Heart left ventricle (tissue), 16 donors: ENCODE measurements at regions of chr3 and their contacts with region 1.

Region 1: DNA sequence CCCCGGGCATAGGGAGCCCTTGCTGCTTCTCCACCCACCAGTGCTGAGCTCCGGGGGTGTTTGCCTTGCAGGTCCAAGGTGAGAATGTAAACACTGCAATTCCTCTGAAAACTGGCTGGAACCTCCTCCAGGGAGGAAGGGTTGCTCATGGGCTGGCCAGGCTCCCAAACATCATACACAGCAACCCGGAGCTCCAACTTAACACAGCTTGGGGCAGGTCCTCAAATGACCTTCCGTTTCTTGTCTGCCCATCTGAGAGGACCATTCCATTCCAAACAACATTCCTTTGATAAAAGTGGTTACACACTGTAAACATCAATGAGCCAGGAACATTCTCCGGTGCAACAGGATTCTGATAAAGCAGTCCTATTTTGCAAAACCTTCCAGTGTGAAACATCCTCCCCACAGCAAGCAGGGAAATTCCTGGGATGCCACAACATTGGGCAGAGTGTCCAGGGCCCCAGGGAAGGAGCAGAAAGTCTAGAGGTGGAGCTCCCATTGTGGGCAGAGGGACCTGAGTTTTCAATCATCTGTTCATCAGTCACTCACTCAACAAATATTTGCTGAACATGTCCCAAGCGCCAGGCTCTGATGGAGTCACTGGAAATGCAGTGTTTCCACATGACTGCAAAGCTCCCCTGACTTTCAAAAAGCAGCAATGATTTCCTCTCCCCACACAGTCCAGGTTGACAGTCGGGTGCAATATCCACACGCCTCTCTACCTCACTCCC is 7.3 kb upstream of the HEG1 start:
- DNase-seq: peak in 3 of 5 donors; percentile 36 to 51 (median 45)
- ATAC-seq: peak; percentile 28 to 70 (median 64)
- H3K4me3 ChIP-seq: peak overlapping the region in 3 of 12 donors; percentile 31 to 48 (median 33)
- H3K27ac ChIP-seq: peak overlapping the region; percentile 17 to 95 (median 76)
- H3K4me1 ChIP-seq: peaks cover 13 to 48% (median 36%) of the 10 kb centered on the region in 12 donors
- H3K27me3 ChIP-seq: no peaks in the 10 kb centered on the region
- CTCF ChIP-seq: no peak
- POLR2A ChIP-seq: no peak

Region 2: GRCh38 chr3:124985358-124985757 is 77.7 kb before region 1 on chr3:
- intact Hi-C with region 1: no loop called
- DNase-seq: peak in 1 of 5 donors; percentile 35
- ATAC-seq: peak in 3 of 4 donors; percentile 67 to 71 (median 69)
- H3K4me3 ChIP-seq: no peak overlapping the region
- H3K27ac ChIP-seq: peak overlapping the region in 11 of 12 donors; percentile 17 to 83 (median 55)
- H3K4me1 ChIP-seq: peaks cover 4 to 48% (median 22%) of the 10 kb centered on the region in 12 donors
- H3K27me3 ChIP-seq: no peaks in the 10 kb centered on the region
- CTCF ChIP-seq: no peak
- POLR2A ChIP-seq: no peak

Region 3: GRCh38 chr3:125119752-125120378 is 56.8 kb after region 1 on chr3:
- intact Hi-C with region 1: loop called in 4 of 10 experiments (anchors 5 to 10 kb)
- DNase-seq: no peak
- ATAC-seq: no peak
- H3K4me3 ChIP-seq: peak overlapping the region in 1 of 12 donors; percentile 20
- H3K27ac ChIP-seq: peak overlapping the region in 1 of 12 donors; percentile 50
- H3K4me1 ChIP-seq: peaks cover 0 to 62% (median 30%) of the 10 kb centered on the region in 12 donors
- H3K27me3 ChIP-seq: no peaks in the 10 kb centered on the region
- CTCF ChIP-seq: no peak
- POLR2A ChIP-seq: no peak

Region 4: DNA sequence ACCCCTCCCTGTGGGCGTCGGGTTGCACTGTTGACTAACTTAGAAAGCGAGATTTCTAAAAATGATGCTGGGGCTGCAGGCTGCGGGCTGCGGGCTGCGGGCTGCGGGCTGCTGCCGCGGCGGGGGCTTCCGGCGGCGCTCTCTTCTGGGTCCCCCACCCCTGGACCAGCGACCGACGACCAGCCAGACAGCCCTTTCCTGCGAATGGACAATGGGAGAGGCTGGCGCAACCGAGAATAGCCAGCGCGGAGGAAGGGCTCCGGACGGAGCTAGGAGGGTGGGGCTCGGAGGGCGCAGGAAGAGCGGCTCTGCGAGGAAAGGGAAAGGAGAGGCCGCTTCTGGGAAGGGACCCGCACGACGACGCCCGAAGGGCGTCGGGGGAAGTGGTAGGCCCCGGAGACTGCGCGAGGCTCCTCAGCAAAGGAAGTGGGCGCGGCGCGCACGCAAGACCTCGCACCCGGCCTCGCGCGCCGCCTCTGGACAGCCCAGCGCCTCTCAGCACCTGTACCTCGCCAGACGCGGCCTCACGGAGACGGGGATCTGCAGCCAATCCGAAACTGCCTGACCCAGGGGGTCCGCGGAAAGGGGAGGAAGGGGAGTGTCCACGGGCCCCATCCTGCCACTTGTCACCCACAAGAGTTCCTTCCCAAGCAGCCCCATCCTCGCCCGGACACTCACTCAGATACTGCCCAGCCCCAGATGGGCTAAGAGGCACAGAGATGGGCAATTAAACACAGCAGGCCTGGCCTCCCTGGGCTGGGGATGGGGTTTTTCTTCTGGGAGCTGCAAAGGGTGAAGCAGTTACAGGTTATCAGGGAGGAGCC is 78.8 kb after region 1 on chr3:
- intact Hi-C with region 1: loop called in 6 of 10 experiments (anchors 2 to 10 kb)
- DNase-seq: peak; percentile 84 to 89 (median 86)
- ATAC-seq: peak; percentile 47 to 88 (median 76)
- H3K4me3 ChIP-seq: peak overlapping the region in 11 of 12 donors; percentile 22 to 58 (median 46)
- H3K27ac ChIP-seq: peak overlapping the region; percentile 66 to 96 (median 79)
- H3K4me1 ChIP-seq: peaks cover 10 to 74% (median 57%) of the 10 kb centered on the region in 12 donors
- H3K27me3 ChIP-seq: no peaks in the 10 kb centered on the region
- CTCF ChIP-seq: peak; percentile 27 to 71 (median 46)
- POLR2A ChIP-seq: peak in 1 of 2 donors; percentile 13